Caco-2 (cell line): ENCODE measurements at regions of chr1 and their contacts with region 1.

Region 1: GRCh38 chr1:167927046-167927754 is 9.3 kb upstream of the DCAF6 start:
- DNase-seq: no peak
- H3K4me3 ChIP-seq: peak overlapping the region; percentile 29
- H3K4me3 Mint-ChIP-seq: peak overlapping the region; percentile 65
- H3K27ac Mint-ChIP-seq: peak overlapping the region; percentile 30
- H3K4me1 ChIP-seq: peaks cover 60% of the 10 kb centered on the region
- H3K4me1 Mint-ChIP-seq: peaks cover 33% of the 10 kb centered on the region
- H3K27me3 ChIP-seq: no peaks in the 10 kb centered on the region
- H3K27me3 Mint-ChIP-seq: no peaks in the 10 kb centered on the region
- CTCF ChIP-seq: no peak

Region 2: GRCh38 chr1:167715157-167715999 is 211.8 kb before region 1 on chr1:
- CTCF ChIA-PET with region 1: no interaction called
- POLR2A ChIA-PET with region 1: no interaction called
- intact Hi-C with region 1: loop called (anchors 2 kb)
- DNase-seq: peak; percentile 84 to 89
- H3K4me3 ChIP-seq: peak overlapping the region; percentile 93
- H3K4me3 Mint-ChIP-seq: peak overlapping the region; percentile 83
- H3K27ac Mint-ChIP-seq: peak overlapping the region; percentile 98
- H3K4me1 ChIP-seq: peaks cover 34% of the 10 kb centered on the region
- H3K4me1 Mint-ChIP-seq: peaks cover 32% of the 10 kb centered on the region
- H3K27me3 ChIP-seq: no peaks in the 10 kb centered on the region
- H3K27me3 Mint-ChIP-seq: peaks cover 8% of the 10 kb centered on the region
- CTCF ChIP-seq: peak; percentile 81 to 89

Region 3: DNA sequence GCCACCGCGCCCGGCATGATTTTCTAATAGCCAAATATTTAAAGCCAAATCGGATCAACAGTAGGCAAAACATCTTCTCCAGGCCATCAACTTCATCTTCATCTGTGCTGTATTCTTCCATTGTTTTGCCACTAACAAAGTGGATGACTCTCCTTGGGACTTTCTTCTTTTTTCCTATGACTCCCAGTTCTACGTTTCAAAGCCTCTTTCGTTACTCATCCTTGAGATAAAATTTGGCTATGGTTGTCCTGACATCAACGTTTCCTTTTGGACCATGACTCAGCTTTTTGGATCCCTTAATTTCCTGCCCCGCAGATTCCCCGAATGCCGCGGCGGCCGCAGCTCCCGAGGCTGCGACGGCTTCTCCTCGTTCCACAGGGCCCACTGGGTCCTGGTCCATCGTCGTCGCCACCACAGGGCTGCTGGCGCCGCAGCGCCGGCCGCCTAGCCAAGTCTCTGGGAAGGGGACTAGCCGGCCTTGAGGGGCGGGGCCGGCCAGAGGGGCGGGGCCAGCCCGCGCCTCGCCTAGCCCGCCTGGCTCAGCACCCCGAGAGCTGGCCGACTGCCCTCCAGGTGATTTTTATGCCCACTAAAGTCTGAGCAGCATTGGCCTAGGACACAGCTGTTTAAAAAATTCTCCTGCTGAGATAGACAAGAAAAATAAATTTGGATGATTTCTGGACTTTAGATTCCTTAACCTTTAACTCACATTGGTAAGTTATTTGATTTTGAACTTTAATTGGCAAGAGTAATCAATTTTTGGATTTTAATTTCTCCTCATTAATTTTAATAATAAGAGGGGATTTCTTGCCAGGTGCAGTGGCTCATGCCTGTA is 107.1 kb before region 1 on chr1:
- CTCF ChIA-PET with region 1: interaction called, 3 read pairs
- POLR2A ChIA-PET with region 1: interaction called, 4 read pairs
- intact Hi-C with region 1: loop called (anchors 5 kb)
- DNase-seq: no peak
- H3K4me3 ChIP-seq: no peak overlapping the region
- H3K4me3 Mint-ChIP-seq: no peak overlapping the region
- H3K27ac Mint-ChIP-seq: peak overlapping the region; percentile 43
- H3K4me1 ChIP-seq: peaks cover 27% of the 10 kb centered on the region
- H3K4me1 Mint-ChIP-seq: peaks cover 25% of the 10 kb centered on the region
- H3K27me3 ChIP-seq: no peaks in the 10 kb centered on the region
- H3K27me3 Mint-ChIP-seq: no peaks in the 10 kb centered on the region
- CTCF ChIP-seq: no peak

Region 4: DNA sequence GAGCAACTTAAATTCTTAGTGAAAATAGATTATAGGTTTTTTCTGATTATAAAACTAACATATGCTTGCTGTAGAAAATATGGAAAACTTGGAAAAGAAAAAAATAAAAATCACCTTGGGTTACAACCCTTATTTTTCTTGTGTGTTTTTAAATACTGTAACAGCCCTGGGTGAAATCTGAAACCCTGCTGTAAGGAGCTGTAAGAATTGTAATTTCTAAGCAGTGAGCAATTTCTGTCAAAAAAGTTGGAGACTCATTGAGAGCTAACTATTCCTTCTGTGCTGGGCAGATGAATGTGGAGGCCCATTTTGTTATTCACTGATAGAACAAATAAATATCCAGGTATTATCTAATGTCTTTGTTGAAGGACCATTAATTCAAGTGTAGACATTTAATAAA is 55.9 kb before region 1 on chr1:
- CTCF ChIA-PET with region 1: no interaction called
- POLR2A ChIA-PET with region 1: no interaction called
- intact Hi-C with region 1: loop called (anchors 2 kb)
- DNase-seq: no peak
- H3K4me3 ChIP-seq: no peak overlapping the region
- H3K4me3 Mint-ChIP-seq: no peak overlapping the region
- H3K27ac Mint-ChIP-seq: no peak overlapping the region
- H3K4me1 ChIP-seq: peaks cover 31% of the 10 kb centered on the region
- H3K4me1 Mint-ChIP-seq: no peaks in the 10 kb centered on the region
- H3K27me3 ChIP-seq: no peaks in the 10 kb centered on the region
- H3K27me3 Mint-ChIP-seq: no peaks in the 10 kb centered on the region
- CTCF ChIP-seq: no peak

Region 5: DNA sequence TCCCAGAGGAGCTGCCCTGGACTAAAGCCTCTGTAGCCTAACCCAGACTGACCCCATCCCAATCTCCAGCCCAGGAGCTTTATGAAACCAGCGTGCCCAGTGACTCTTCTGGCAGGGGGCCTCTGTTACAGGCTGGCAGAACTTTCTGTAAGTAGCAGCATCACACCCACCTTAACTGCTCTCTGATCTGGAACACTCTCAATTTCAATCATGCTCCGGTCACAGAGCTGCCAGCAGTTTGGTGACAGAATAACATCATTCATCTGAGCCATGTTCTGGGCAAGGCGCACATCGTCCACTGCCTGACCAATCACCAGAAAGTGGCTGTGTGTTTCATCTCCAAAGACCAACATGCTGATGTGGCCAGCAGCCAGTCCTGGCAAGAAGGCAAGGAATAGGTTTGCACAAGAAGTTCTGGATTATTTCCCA is 27.9 kb before region 1 on chr1:
- CTCF ChIA-PET with region 1: no interaction called
- POLR2A ChIA-PET with region 1: no interaction called
- intact Hi-C with region 1: no loop called
- DNase-seq: no peak
- H3K4me3 ChIP-seq: no peak overlapping the region
- H3K4me3 Mint-ChIP-seq: no peak overlapping the region
- H3K27ac Mint-ChIP-seq: no peak overlapping the region
- H3K4me1 ChIP-seq: no peaks in the 10 kb centered on the region; the same call in 1 of the 2 replicates
- H3K4me1 Mint-ChIP-seq: peaks cover 9% of the 10 kb centered on the region
- H3K27me3 ChIP-seq: no peaks in the 10 kb centered on the region
- H3K27me3 Mint-ChIP-seq: no peaks in the 10 kb centered on the region
- CTCF ChIP-seq: no peak

Region 6: DNA sequence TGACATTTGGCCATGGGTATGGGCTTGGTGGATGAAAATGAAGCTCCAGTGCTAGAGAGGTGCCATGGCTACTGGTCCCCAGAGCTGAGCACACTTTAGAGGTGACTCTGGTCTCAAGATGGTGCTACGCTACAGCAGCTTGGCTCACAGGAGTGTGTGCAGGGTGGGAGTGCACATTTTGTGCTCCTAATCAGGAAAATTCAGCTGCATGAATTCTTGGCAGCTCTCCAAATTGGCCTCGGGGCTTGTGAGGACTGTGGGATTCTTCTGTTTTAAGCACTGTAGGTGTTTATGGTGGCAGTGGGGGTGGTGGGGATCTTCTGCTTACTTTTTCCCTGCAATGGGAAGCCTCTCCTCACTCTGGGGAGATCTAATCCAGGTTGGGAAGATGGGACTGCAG is 234.3 kb after region 1 on chr1:
- CTCF ChIA-PET with region 1: no interaction called
- POLR2A ChIA-PET with region 1: no interaction called
- intact Hi-C with region 1: no loop called
- DNase-seq: no peak
- H3K4me3 ChIP-seq: no peak overlapping the region
- H3K4me3 Mint-ChIP-seq: no peak overlapping the region
- H3K27ac Mint-ChIP-seq: no peak overlapping the region
- H3K4me1 ChIP-seq: no peaks in the 10 kb centered on the region
- H3K4me1 Mint-ChIP-seq: no peaks in the 10 kb centered on the region
- H3K27me3 ChIP-seq: no peaks in the 10 kb centered on the region
- H3K27me3 Mint-ChIP-seq: no peaks in the 10 kb centered on the region
- CTCF ChIP-seq: no peak